CD14-positive monocyte (primary cell): ENCODE measurements at regions of chr6 and their contacts with region 1.

Region 1: DNA sequence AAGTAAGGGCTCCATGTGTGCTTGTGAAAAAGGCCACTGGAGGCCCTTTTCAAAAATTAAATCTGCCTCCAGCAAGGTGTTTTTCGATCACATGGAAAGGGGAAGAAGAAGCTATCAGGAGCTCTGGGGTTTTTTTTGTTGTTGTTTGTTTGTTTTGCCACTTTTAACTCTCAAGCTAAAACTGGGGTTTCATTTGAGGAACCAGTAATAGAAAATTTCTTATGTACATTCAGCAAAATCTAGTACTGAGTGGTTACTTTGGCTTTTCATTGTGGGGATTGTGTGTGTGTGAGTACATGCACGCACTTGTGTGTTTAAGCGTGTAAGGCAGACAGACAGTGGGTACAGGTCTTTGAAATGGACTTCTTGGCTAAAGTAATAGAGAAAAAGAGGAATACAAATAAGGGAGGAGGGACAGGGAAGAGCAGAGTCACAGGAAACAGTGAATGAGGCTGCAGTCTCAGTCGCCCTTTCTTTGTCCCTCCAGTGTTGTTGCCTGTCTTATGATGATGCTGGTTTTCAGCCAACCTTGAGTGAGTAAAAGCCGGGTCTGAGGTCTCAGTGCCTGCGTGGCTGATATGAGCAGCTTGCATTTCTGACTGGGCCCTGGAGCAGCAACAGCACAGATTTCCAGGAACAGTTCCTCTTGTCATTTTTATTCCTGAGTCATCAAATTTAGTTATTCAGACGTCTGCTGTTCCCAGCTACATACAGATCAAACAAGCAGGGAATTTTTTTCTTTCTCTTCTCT is 26.2 kb downstream of the SLC16A10 start:
- DNase-seq: peak; percentile 57 to 80 (median 65)
- H3K4me3 ChIP-seq: no peak overlapping the region
- H3K4me3 Mint-ChIP-seq: peak overlapping the region; percentile 38 to 68
- H3K27ac ChIP-seq: peak overlapping the region in 1 of 2 donors; percentile 68
- H3K27ac Mint-ChIP-seq: peak overlapping the region; percentile 87 to 96 (median 94)
- H3K4me1 ChIP-seq: peaks cover 7 to 13% of the 10 kb centered on the region in 2 donors
- H3K4me1 Mint-ChIP-seq: peaks cover 18% of the 10 kb centered on the region
- H3K27me3 ChIP-seq: no peaks in the 10 kb centered on the region
- H3K27me3 Mint-ChIP-seq: peaks cover 0 to 4% (median 0%) of the 10 kb centered on the region in 3 donors
- CTCF ChIP-seq: no peak

Region 2: DNA sequence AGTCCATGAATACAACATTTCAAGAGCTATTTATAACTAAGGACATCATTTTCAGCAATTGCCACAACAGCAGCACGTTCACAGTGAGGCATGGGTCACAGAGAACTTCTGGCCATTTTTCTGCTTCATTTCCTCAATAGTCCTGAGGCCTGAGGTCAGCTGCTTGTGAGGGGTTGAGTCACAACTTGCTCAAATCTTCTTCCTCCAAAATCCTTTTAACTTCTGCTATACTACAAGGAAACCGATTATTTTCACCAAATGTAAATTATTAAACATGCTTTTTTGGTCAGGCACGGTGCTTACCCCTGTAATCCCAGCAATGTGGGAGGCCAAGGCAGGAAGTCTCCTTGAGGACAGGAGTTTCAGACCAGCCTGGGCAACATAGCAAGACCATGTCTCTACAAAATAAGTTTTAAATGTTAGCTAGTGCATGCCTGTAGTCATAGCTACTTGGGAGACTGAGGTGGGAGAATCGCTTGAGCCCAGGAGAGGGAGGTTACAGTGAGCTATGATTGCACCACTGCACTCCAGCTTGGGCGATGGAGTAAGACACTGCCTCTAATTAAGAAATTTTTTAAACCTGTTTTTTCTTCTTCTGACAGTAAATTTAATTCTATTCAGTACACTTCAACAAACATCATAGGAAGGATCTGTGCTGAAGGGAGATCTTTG is 37.4 kb before region 1 on chr6:
- intact Hi-C with region 1: loop called in 1 of 2 experiments (anchors 5 kb)
- DNase-seq: peak; percentile 78 to 86 (median 80)
- H3K4me3 ChIP-seq: peak overlapping the region in 1 of 3 experiments; percentile 40
- H3K4me3 Mint-ChIP-seq: peak overlapping the region in 1 of 2 donors; percentile 67
- H3K27ac ChIP-seq: peak overlapping the region; percentile 79 to 85
- H3K27ac Mint-ChIP-seq: peak overlapping the region; percentile 90 to 97 (median 94)
- H3K4me1 ChIP-seq: peaks cover 19 to 21% of the 10 kb centered on the region in 2 donors
- H3K4me1 Mint-ChIP-seq: peaks cover 16% of the 10 kb centered on the region
- H3K27me3 ChIP-seq: no peaks in the 10 kb centered on the region
- H3K27me3 Mint-ChIP-seq: peaks cover 1 to 7% (median 3%) of the 10 kb centered on the region in 3 donors
- CTCF ChIP-seq: no peak